ENCODE measurements at regions of chr4 and their contacts with region 1.

Region 1: GRCh38 chr4:164359881-164360280 is 394.1 kb upstream of the SMIM31 start:
- DNase-seq: no peak

Region 2: GRCh38 chr4:164989471-164989870 is 629.6 kb after region 1 on chr4:
- intact Hi-C with region 1: loop called in 1 of 2 experiments (anchors 5 kb)
- DNase-seq: no peak